ENCODE measurements at regions of chr16 and their contacts with region 1.

Region 1: DNA sequence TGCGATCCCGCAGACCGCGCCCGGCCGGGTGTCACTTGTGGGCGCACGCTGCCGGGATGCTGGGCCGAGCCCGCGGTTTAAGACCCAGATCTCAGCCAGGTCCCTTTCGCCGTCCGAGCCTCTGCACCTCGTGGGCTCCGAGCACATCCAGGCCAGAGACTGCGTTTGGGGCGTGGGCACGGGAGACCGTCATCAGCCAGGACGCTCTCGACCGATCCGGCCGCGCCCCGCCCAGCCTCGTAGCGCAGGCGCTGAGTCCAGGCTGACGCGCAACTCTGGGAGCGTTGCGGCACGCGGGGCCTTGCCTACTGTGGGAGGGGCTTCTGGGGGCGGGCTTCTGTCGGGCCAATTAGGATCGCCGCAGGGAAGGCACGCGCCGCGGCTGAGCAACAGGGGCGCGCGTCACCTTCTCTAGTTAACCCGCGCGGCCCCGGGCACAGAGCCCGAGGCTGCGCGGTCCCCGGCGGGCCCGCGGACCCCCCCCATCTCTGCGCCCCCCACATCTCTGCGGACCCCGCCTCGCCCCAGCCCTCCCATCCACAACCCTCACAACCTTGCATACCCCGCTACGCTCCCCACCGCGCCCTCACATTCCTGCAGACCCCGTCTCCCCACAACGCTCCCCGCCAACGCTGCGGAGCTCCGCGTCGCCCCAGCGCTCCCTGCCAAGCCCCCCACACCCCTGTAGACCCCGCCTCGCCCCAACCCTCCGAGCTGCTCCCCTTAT is 722 bp upstream of the CEMP1 start:
- DNase-seq: peak; percentile 98 to 99
- ATAC-seq: peak; percentile 80 to 86
- H3K4me3 ChIP-seq: peak overlapping the region; percentile 75 to 93 (median 85)
- H3K27ac ChIP-seq: peak overlapping the region; percentile 95 to 99 (median 98)
- H3K4me1 ChIP-seq: peaks cover 0 to 12% of the 10 kb centered on the region in 2 donors
- H3K27me3 ChIP-seq: no peaks in the 10 kb centered on the region
- CTCF ChIP-seq: no peak
- POLR2A ChIP-seq: peak; percentile 79 to 83

Region 2: GRCh38 chr16:1942810-1943726 is 588.9 kb before region 1 on chr16 and contains the start of gene MSRB1:
- in situ Hi-C with region 1: no loop called
- intact Hi-C with region 1: loop called (anchors 10 kb)
- DNase-seq: peak; percentile 100
- ATAC-seq: peak; percentile 59 to 80
- H3K4me3 ChIP-seq: peak within 1 kb of the TSS; percentile 81 to 99 (median 94)
- H3K27ac ChIP-seq: peak within 1 kb of the TSS; percentile 98 to 100 (median 98)
- H3K4me1 ChIP-seq: peaks cover 29 to 58% of the 10 kb centered on the region in 2 donors
- H3K27me3 ChIP-seq: no peaks in the 10 kb centered on the region
- CTCF ChIP-seq: peak in 1 of 5 experiments; percentile 18
- POLR2A ChIP-seq: peak; percentile 98 to 100
- total RNA-seq, gene MSRB1: 16.7 to 40.7 (median 35.2) TPM

Region 3: DNA sequence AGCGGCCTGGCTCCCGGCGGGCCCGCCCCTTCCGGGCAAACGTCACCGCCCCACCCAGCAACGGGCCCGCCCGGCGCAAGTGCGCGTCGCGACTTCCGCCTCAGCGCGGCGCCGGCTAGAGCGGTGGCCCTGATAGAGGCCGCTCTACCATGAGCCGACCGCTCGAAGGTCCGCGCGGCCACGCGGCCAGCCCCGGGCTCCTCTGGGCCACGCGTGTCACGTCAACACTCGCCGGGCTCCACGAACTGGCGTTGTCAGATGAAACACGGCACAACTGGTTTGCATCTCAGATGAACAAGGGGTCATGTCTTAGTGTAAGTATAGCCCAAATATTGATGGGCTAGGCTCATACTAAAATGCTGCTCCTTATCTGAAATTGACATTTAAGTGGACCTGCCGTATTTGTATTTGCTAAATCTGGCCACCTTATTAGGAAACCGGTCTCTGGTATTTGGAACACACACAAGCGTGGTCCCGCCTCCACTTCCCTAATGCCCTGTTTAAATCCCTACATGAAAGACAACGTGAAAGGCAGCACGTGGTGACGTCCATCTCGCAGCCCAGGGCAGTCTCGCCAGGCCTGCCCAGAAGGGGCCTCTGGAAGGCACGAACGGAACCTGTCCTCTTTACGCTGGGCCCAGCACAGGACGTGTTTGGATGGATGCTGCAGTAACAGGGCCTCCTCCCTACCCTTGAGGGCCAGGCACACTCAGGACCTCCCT is 522.0 kb before region 1 on chr16 and contains the start of gene ZNF598:
- in situ Hi-C with region 1: no loop called
- intact Hi-C with region 1: loop called (anchors 10 kb)
- DNase-seq: peak; percentile 61 to 75
- ATAC-seq: peak; percentile 90 to 95
- H3K4me3 ChIP-seq: peak within 1 kb of the TSS; percentile 63 to 97 (median 84)
- H3K27ac ChIP-seq: peak within 1 kb of the TSS; percentile 85 to 99 (median 95)
- H3K4me1 ChIP-seq: peaks cover 37 to 47% of the 10 kb centered on the region in 2 donors
- H3K27me3 ChIP-seq: no peaks in the 10 kb centered on the region
- CTCF ChIP-seq: peak in 1 of 5 experiments; percentile 8
- POLR2A ChIP-seq: peak; percentile 85 to 96
- total RNA-seq, gene ZNF598: 57.0 to 92.2 (median 75.4) TPM

Region 4: DNA sequence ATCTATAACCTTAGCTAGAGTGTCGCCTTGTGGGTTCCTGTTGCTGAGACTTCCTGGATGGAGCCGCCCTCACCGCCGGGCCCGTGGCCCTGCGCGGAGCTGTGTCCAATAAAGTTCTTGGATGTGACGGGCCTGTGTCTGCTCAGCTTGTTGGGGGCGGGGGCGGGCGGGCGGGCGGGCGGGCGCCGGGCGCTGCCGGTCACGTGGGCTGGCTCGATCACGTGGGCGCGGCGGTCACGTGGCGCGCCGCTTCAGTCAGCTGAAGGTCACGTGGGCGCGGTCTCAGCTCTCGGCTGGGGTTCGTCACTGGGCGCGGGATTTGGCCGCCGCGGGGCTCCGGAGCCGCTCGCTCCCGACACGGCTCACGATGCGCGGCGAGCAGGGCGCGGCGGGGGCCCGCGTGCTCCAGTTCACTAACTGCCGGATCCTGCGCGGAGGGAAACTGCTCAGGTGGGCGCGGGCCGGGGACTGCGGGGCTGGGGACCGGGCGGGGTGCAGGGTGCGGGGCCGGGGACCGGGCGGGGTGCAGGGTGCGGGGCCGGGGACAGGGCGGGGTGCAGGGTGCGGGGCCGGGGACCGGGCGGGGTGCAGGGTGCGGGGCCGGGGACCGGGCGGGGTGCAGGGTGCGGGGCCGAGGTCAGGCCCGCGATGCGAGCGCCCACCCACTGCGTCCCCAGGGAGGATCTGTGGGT is 11.7 kb before region 1 on chr16 and contains the start of gene AMDHD2:
- in situ Hi-C with region 1: no loop called
- intact Hi-C with region 1: loop called (anchors 1 kb)
- DNase-seq: peak; percentile 86 to 87
- ATAC-seq: peak; percentile 71 to 73
- H3K4me3 ChIP-seq: peak within 1 kb of the TSS; percentile 54 to 77 (median 60)
- H3K27ac ChIP-seq: peak within 1 kb of the TSS; percentile 98 to 100 (median 98)
- H3K4me1 ChIP-seq: peaks cover 54 to 56% of the 10 kb centered on the region in 2 donors
- H3K27me3 ChIP-seq: no peaks in the 10 kb centered on the region
- CTCF ChIP-seq: peak in 1 of 5 experiments; percentile 12
- POLR2A ChIP-seq: peak; percentile 57 to 60
- total RNA-seq, gene AMDHD2: 12.3 to 18.1 (median 13.7) TPM

Region 5: GRCh38 chr16:2595393-2596205 is 63.7 kb after region 1 on chr16:
- in situ Hi-C with region 1: no loop called
- intact Hi-C with region 1: loop called (anchors 10 kb)
- DNase-seq: no peak
- ATAC-seq: no peak
- H3K4me3 ChIP-seq: no peak overlapping the region
- H3K27ac ChIP-seq: peak overlapping the region; percentile 85 to 87 (median 85)
- H3K4me1 ChIP-seq: peaks cover 38 to 48% of the 10 kb centered on the region in 2 donors
- H3K27me3 ChIP-seq: no peaks in the 10 kb centered on the region
- CTCF ChIP-seq: no peak
- POLR2A ChIP-seq: no peak

Region 6: GRCh38 chr16:2673066-2673999 is 141.4 kb after region 1 on chr16:
- in situ Hi-C with region 1: no loop called
- intact Hi-C with region 1: loop called (anchors 10 kb)
- DNase-seq: peak; percentile 91 to 96
- ATAC-seq: peak; percentile 70 to 84
- H3K4me3 ChIP-seq: peak overlapping the region; percentile 58 to 89 (median 72)
- H3K27ac ChIP-seq: peak overlapping the region; percentile 79 to 86 (median 82)
- H3K4me1 ChIP-seq: peaks cover 26 to 32% of the 10 kb centered on the region in 2 donors
- H3K27me3 ChIP-seq: no peaks in the 10 kb centered on the region
- CTCF ChIP-seq: no peak
- POLR2A ChIP-seq: peak; percentile 67 to 69